ENCODE measurements at regions of chr2 and their contacts with region 1.

Region 1: DNA sequence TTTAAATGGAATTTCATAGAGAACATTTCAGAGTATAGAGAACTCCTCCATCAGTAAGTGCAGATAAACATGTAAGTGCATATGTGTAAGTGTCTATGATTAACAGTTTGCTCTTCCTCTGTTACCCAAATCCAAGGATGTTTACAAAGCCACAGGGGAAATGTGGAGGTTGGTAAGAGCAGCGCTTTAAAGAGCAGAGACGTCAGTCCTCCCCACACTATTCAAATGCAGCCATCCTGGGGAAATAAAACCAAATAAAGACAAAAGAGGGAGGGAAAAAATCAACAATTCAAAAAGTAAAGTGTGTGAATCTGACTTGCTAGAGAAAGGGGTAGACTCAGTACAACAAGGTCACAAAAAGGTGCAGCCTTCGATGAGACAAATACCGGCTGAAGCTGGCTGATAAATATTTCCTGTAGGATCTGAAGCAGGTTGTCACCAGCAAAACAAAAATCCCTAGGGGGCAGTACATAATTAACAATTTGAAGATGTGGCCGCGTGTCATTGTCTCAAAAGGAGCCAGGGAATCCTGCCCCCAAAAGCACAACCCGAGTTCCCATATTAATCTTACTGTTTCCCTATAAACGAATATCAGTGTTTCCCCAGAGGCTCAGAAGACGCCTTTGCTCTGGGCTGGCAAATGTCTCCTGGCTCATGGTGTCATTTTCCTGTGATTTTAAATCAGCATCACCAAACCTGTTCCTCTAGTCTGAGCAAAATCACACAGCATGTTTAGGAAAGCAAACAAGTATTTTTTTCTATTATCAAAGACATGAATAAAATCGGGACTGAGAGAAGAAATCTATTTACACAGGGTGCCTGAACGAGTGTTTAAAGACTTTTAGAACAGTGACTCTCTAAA is 216.6 kb downstream of the CDCA7 start:
- DNase-seq: no peak
- ATAC-seq: peak; percentile 54 to 91 (median 72)
- H3K4me3 ChIP-seq: peak overlapping the region; percentile 35
- H3K27ac ChIP-seq: no peak overlapping the region
- H3K4me1 ChIP-seq: peaks cover 8% of the 10 kb centered on the region
- H3K27me3 ChIP-seq: no peaks in the 10 kb centered on the region
- CTCF ChIP-seq: peak; percentile 47

Region 2: DNA sequence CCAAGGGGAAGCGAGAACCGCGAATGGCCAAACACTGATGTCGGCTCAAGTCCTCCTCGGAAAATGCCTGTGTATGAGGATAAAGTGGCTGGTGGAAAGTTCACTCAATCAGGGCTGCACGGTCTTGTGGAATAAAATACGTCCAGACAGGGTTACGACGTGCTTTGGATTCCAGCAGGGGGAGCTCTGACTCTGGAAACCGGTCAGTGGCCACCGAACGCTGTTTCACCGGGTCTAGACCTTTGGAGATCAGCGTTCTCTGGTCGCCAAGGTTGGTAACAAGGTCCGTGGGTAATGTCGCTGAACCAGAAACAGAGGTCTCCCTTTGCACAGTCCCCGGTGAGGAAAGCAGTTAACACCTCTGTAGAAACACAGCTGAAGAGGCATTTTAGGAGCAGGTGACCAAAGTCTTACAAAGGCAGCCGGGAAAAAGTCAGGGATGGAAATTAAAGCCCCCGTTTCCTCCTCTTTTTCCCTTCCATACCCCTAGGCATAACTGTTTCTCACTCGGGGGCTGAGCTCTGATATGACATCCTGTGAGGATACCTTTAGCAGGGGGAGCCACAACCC is 168.8 kb before region 1 on chr2:
- intact Hi-C with region 1: loop called in 1 of 2 experiments (anchors 10 kb)
- DNase-seq: peak; percentile 69 to 83
- ATAC-seq: peak; percentile 93 to 99 (median 96)
- H3K4me3 ChIP-seq: peak overlapping the region; percentile 56
- H3K27ac ChIP-seq: no peak overlapping the region
- H3K4me1 ChIP-seq: peaks cover 6% of the 10 kb centered on the region
- H3K27me3 ChIP-seq: peaks cover 0 to 2% (median 0%) of the 10 kb centered on the region in 3 donors
- CTCF ChIP-seq: peak; percentile 86

Region 3: GRCh38 chr2:173667417-173667816 is 96.2 kb after region 1 on chr2:
- intact Hi-C with region 1: loop called in 1 of 2 experiments (anchors 10 kb)
- DNase-seq: no peak
- ATAC-seq: no peak
- H3K4me3 ChIP-seq: no peak overlapping the region
- H3K27ac ChIP-seq: no peak overlapping the region
- H3K4me1 ChIP-seq: no peaks in the 10 kb centered on the region
- H3K27me3 ChIP-seq: no peaks in the 10 kb centered on the region
- CTCF ChIP-seq: peak; percentile 32

Region 4: GRCh38 chr2:173884025-173884802 is 313.0 kb after region 1 on chr2:
- intact Hi-C with region 1: loop called in 1 of 2 experiments (anchors 10 kb)
- DNase-seq: peak; percentile 35 to 58
- ATAC-seq: peak in 3 of 4 donors; percentile 37 to 74 (median 57)
- H3K4me3 ChIP-seq: no peak overlapping the region
- H3K27ac ChIP-seq: no peak overlapping the region
- H3K4me1 ChIP-seq: peaks cover 6% of the 10 kb centered on the region
- H3K27me3 ChIP-seq: peaks cover 0 to 2% (median 0%) of the 10 kb centered on the region in 3 donors
- CTCF ChIP-seq: peak; percentile 63

Region 5: GRCh38 chr2:174039551-174040416 is 468.5 kb after region 1 on chr2:
- intact Hi-C with region 1: loop called (anchors 5 to 10 kb)
- DNase-seq: peak; percentile 86 to 92
- ATAC-seq: peak; percentile 76 to 87 (median 80)
- H3K4me3 ChIP-seq: peak overlapping the region; percentile 40
- H3K27ac ChIP-seq: peak overlapping the region; percentile 75
- H3K4me1 ChIP-seq: peaks cover 20% of the 10 kb centered on the region
- H3K27me3 ChIP-seq: no peaks in the 10 kb centered on the region
- CTCF ChIP-seq: peak; percentile 78

Region 6: DNA sequence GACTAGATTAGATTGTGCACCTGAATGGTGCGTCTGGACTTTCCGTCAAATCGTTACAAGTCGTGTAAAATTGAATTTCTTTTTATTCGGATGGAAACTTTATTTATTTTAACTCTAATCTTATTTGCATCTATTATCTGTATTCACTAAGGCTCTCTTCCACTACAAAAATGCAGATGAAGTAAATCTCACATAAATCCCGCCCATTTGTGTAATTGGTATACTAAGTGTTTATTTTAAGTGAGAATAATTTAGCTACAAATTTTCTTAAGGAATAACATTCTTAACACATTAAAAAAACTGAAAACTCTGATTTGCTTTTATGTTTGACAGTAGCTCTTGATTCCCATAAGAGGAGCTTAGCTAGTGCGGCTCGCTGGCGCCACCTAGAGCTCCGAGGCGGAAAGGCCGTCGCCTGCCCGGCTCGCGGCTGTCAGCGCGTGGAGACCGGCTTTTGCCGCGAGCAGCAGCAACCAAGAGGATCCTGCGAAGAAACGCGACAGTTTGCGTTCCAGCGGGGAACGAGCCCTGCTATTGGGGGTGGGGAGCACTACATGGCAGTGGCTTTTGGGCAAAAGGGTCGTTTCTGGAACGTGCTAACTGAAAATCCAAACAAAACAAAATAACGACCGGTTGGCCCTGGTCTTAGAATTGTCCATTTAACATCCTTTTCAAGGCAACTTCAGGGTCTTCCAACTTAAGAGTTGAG is 770.2 kb after region 1 on chr2:
- intact Hi-C with region 1: loop called in 1 of 2 experiments (anchors 10 kb)
- DNase-seq: peak; percentile 80 to 94
- ATAC-seq: peak; percentile 76 to 90 (median 82)
- H3K4me3 ChIP-seq: peak overlapping the region; percentile 47
- H3K27ac ChIP-seq: no peak overlapping the region
- H3K4me1 ChIP-seq: peaks cover 18% of the 10 kb centered on the region
- H3K27me3 ChIP-seq: peaks cover 0 to 81% (median 28%) of the 10 kb centered on the region in 3 donors
- CTCF ChIP-seq: peak; percentile 99

Measured in psoas muscle (tissue), 8 donors.